Mammary epithelial cell (primary cell): ENCODE measurements at regions of chr9 and their contacts with region 1.

Region 1: GRCh38 chr9:26477963-26478362 is 414.6 kb downstream of the CAAP1 start:
- DNase-seq: no peak
- H3K4me3 ChIP-seq: no peak overlapping the region
- H3K27ac ChIP-seq: no peak overlapping the region
- H3K4me1 ChIP-seq: no peaks in the 10 kb centered on the region
- H3K27me3 ChIP-seq: no peaks in the 10 kb centered on the region
- CTCF ChIP-seq: no peak

Region 2: GRCh38 chr9:26537211-26537610 is 59.2 kb after region 1 on chr9:
- CTCF ChIA-PET with region 1: no interaction called
- dilution Hi-C with region 1: no loop called
- in situ Hi-C with region 1: no loop called
- intact Hi-C with region 1: no loop called
- DNase-seq: no peak
- H3K4me3 ChIP-seq: no peak overlapping the region
- H3K27ac ChIP-seq: no peak overlapping the region
- H3K4me1 ChIP-seq: no peaks in the 10 kb centered on the region
- H3K27me3 ChIP-seq: no peaks in the 10 kb centered on the region
- CTCF ChIP-seq: no peak

Region 3: DNA sequence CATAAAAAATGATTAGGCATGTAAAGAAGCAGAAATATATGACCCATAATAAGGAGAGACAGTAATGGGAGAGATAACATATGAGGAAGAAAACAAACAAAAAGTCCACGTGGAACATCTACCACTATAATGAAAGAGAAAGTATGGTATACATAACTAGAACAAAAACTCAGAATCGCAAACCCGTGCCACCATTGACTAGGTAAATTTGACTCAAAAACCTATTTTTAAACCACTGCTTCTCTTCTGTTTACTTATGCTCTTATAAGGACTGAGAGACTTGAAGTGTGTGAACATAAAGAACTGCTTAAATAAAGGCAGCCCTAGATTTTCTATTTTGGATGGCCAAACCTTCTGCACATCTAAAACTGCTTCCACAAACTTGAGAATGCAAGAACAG is 84.0 kb after region 1 on chr9:
- CTCF ChIA-PET with region 1: no interaction called
- dilution Hi-C with region 1: loop called (anchors 5 kb)
- in situ Hi-C with region 1: no loop called
- intact Hi-C with region 1: no loop called
- DNase-seq: no peak
- H3K4me3 ChIP-seq: no peak overlapping the region
- H3K27ac ChIP-seq: no peak overlapping the region
- H3K4me1 ChIP-seq: no peaks in the 10 kb centered on the region
- H3K27me3 ChIP-seq: no peaks in the 10 kb centered on the region
- CTCF ChIP-seq: no peak